CD8-positive, alpha-beta T cell (primary cell): ENCODE measurements at regions of chr5 and their contacts with region 1.

Region 1: GRCh38 chr5:40679155-40679913 is 381 bp upstream of the PTGER4 start:
- DNase-seq: peak; percentile 80 to 94 (median 92)
- ATAC-seq: peak; percentile 69
- H3K4me3 ChIP-seq: peak overlapping the region; percentile 77 to 92
- H3K4me3 Mint-ChIP-seq: peak overlapping the region; percentile 94
- H3K27ac ChIP-seq: peak overlapping the region; percentile 89 to 91
- H3K27ac Mint-ChIP-seq: peak overlapping the region; percentile 92
- H3K4me1 ChIP-seq: peaks cover 30% of the 10 kb centered on the region
- H3K4me1 Mint-ChIP-seq: peaks cover 55% of the 10 kb centered on the region
- H3K27me3 ChIP-seq: no peaks in the 10 kb centered on the region
- H3K27me3 Mint-ChIP-seq: no peaks in the 10 kb centered on the region
- CTCF ChIP-seq: no peak

Region 2: GRCh38 chr5:40404613-40405012 is 274.7 kb before region 1 on chr5:
- CTCF ChIA-PET with region 1: interaction called, 8 read pairs
- POLR2A ChIA-PET with region 1: interaction called, 19 read pairs
- intact Hi-C with region 1: no loop called
- DNase-seq: peak in 2 of 9 experiments; percentile 55 to 75
- ATAC-seq: peak; percentile 51
- H3K4me3 ChIP-seq: no peak overlapping the region
- H3K4me3 Mint-ChIP-seq: peak overlapping the region; percentile 23
- H3K27ac ChIP-seq: peak overlapping the region; percentile 7 to 97
- H3K27ac Mint-ChIP-seq: peak overlapping the region; percentile 84
- H3K4me1 ChIP-seq: peaks cover 55% of the 10 kb centered on the region
- H3K4me1 Mint-ChIP-seq: peaks cover 76% of the 10 kb centered on the region
- H3K27me3 ChIP-seq: no peaks in the 10 kb centered on the region
- H3K27me3 Mint-ChIP-seq: no peaks in the 10 kb centered on the region
- CTCF ChIP-seq: no peak

Region 3: DNA sequence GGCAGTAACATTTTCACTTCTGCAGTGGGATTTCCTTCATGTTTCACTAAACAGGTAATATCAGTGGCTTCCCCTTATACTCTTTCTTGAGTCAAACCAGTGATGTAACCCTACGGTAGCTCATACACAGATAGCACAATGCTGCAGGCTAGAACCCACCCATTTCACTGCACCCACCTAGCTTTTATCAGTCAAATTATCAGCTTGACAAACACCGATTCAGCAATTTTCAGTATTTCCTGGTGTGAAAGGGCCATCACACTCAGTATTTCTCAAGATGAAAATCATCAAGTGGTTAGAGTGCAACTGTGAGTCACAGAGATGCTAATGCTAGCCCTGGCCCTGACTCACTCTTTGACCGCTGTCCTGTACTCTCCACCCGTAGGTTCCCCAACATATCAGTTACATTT is 241.9 kb before region 1 on chr5:
- CTCF ChIA-PET with region 1: interaction called, 12 read pairs
- POLR2A ChIA-PET with region 1: interaction called, 7 read pairs
- intact Hi-C with region 1: loop called in 1 of 2 experiments (anchors 2 kb)
- DNase-seq: peak in 6 of 9 experiments; percentile 17 to 85 (median 32)
- ATAC-seq: peak; percentile 20
- H3K4me3 ChIP-seq: no peak overlapping the region
- H3K4me3 Mint-ChIP-seq: no peak overlapping the region
- H3K27ac ChIP-seq: peak overlapping the region; percentile 51 to 91
- H3K27ac Mint-ChIP-seq: peak overlapping the region; percentile 86
- H3K4me1 ChIP-seq: peaks cover 40% of the 10 kb centered on the region
- H3K4me1 Mint-ChIP-seq: peaks cover 67% of the 10 kb centered on the region
- H3K27me3 ChIP-seq: no peaks in the 10 kb centered on the region
- H3K27me3 Mint-ChIP-seq: no peaks in the 10 kb centered on the region
- CTCF ChIP-seq: no peak

Region 4: GRCh38 chr5:40623480-40624420 is 55.6 kb before region 1 on chr5:
- CTCF ChIA-PET with region 1: interaction called, 3 read pairs
- POLR2A ChIA-PET with region 1: interaction called, 8 read pairs
- intact Hi-C with region 1: loop called in 1 of 2 experiments (anchors 1 kb)
- DNase-seq: peak in 6 of 9 experiments; percentile 2 to 77 (median 48)
- ATAC-seq: peak; percentile 92
- H3K4me3 ChIP-seq: no peak overlapping the region
- H3K4me3 Mint-ChIP-seq: peak overlapping the region; percentile 35
- H3K27ac ChIP-seq: peak overlapping the region in 1 of 2 experiments; percentile 31
- H3K27ac Mint-ChIP-seq: peak overlapping the region; percentile 84
- H3K4me1 ChIP-seq: peaks cover 29% of the 10 kb centered on the region
- H3K4me1 Mint-ChIP-seq: peaks cover 55% of the 10 kb centered on the region
- H3K27me3 ChIP-seq: no peaks in the 10 kb centered on the region
- H3K27me3 Mint-ChIP-seq: no peaks in the 10 kb centered on the region
- CTCF ChIP-seq: no peak

Region 5: GRCh38 chr5:40755407-40756365 is 76.4 kb after region 1 on chr5 and contains the start of gene TTC33:
- CTCF ChIA-PET with region 1: no interaction called
- POLR2A ChIA-PET with region 1: no interaction called
- intact Hi-C with region 1: loop called in 1 of 2 experiments (anchors 2 kb)
- DNase-seq: peak; percentile 86 to 96 (median 94)
- ATAC-seq: peak; percentile 85
- H3K4me3 ChIP-seq: peak within 1 kb of the TSS; percentile 93 to 98
- H3K4me3 Mint-ChIP-seq: no peak within 1 kb of the TSS
- H3K27ac ChIP-seq: peak within 1 kb of the TSS; percentile 79 to 89
- H3K27ac Mint-ChIP-seq: no peak within 1 kb of the TSS
- H3K4me1 ChIP-seq: peaks cover 18% of the 10 kb centered on the region
- H3K4me1 Mint-ChIP-seq: peaks cover 24% of the 10 kb centered on the region
- H3K27me3 ChIP-seq: no peaks in the 10 kb centered on the region
- H3K27me3 Mint-ChIP-seq: no peaks in the 10 kb centered on the region
- CTCF ChIP-seq: peak; percentile 62
- total RNA-seq, gene TTC33: 6.7 to 7.1 TPM

Region 6: GRCh38 chr5:41356786-41357185 is 677.5 kb after region 1 on chr5:
- CTCF ChIA-PET with region 1: no interaction called
- POLR2A ChIA-PET with region 1: no interaction called
- intact Hi-C with region 1: no loop called
- DNase-seq: no peak
- ATAC-seq: no peak
- H3K4me3 ChIP-seq: no peak overlapping the region
- H3K4me3 Mint-ChIP-seq: no peak overlapping the region
- H3K27ac ChIP-seq: no peak overlapping the region
- H3K27ac Mint-ChIP-seq: no peak overlapping the region
- H3K4me1 ChIP-seq: no peaks in the 10 kb centered on the region
- H3K4me1 Mint-ChIP-seq: no peaks in the 10 kb centered on the region
- H3K27me3 ChIP-seq: no peaks in the 10 kb centered on the region
- H3K27me3 Mint-ChIP-seq: no peaks in the 10 kb centered on the region
- CTCF ChIP-seq: no peak